Naive thymus-derived CD4-positive, alpha-beta T cell (primary cell): ENCODE measurements at regions of chr7 and their contacts with region 1.

Region 1: GRCh38 chr7:43658718-43659548 is 70.4 kb downstream of the COA1 start:
- DNase-seq: no peak
- ATAC-seq: peak; percentile 16
- H3K4me3 ChIP-seq: no peak overlapping the region
- H3K4me3 Mint-ChIP-seq: peak overlapping the region; percentile 3 to 71 (median 62)
- H3K27ac ChIP-seq: peak overlapping the region; percentile 48
- H3K27ac Mint-ChIP-seq: peak overlapping the region; percentile 70 to 92 (median 84)
- H3K4me1 ChIP-seq: peaks cover 31 to 34% of the 10 kb centered on the region in 2 donors
- H3K4me1 Mint-ChIP-seq: peaks cover 46 to 82% (median 70%) of the 10 kb centered on the region in 7 donors
- H3K27me3 ChIP-seq: no peaks in the 10 kb centered on the region
- H3K27me3 Mint-ChIP-seq: no peaks in the 10 kb centered on the region

Region 2: DNA sequence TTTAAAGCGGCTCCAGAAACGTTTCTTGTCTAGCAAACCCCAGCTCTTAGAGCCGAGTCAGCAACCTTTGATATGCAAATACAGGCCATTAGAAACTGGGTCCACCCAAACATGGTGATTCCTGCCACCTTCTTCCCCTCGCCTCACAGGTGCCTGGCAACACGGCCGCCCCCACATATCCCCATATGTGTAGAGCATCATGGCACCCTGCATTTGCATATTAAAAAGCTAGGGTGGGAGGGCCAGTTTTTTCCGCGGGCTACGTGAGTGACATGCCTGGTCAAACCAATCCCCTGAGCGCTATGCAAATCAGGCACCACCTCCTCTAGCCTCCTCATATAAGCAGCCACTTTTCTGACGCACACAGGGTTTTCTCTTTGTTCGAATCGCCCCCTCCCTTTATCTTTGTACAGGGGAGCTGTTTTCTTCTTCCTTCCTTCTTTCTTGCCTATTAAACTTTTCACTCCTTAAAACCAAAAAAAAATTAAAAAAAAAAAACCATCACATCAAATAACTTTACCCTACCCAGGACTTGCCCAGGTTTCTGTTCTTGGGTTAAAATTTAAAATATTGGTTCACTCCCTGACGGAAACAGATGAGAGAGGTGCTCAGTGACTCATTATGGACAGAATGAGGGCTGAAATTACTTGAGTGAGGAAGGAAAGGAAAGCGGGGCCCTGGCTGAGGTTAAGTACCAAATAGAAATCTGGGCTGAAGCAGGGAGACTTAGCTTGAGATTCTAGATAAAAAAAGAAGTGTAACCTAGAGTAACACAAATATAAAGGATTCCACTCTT is 10.6 kb after region 1 on chr7:
- CTCF ChIA-PET with region 1: interaction called, 5 read pairs
- POLR2A ChIA-PET with region 1: interaction called, 9 read pairs
- intact Hi-C with region 1: loop called in 1 of 2 experiments (anchors 1 kb)
- DNase-seq: peak in 7 of 9 donors; percentile 30 to 56 (median 47)
- ATAC-seq: peak; percentile 86
- H3K4me3 ChIP-seq: no peak overlapping the region
- H3K4me3 Mint-ChIP-seq: peak overlapping the region; percentile 39 to 81 (median 66)
- H3K27ac ChIP-seq: peak overlapping the region; percentile 53
- H3K27ac Mint-ChIP-seq: peak overlapping the region; percentile 67 to 93 (median 88)
- H3K4me1 ChIP-seq: peaks cover 10 to 29% of the 10 kb centered on the region in 2 donors
- H3K4me1 Mint-ChIP-seq: peaks cover 39 to 95% (median 91%) of the 10 kb centered on the region in 7 donors
- H3K27me3 ChIP-seq: no peaks in the 10 kb centered on the region
- H3K27me3 Mint-ChIP-seq: no peaks in the 10 kb centered on the region

Region 3: DNA sequence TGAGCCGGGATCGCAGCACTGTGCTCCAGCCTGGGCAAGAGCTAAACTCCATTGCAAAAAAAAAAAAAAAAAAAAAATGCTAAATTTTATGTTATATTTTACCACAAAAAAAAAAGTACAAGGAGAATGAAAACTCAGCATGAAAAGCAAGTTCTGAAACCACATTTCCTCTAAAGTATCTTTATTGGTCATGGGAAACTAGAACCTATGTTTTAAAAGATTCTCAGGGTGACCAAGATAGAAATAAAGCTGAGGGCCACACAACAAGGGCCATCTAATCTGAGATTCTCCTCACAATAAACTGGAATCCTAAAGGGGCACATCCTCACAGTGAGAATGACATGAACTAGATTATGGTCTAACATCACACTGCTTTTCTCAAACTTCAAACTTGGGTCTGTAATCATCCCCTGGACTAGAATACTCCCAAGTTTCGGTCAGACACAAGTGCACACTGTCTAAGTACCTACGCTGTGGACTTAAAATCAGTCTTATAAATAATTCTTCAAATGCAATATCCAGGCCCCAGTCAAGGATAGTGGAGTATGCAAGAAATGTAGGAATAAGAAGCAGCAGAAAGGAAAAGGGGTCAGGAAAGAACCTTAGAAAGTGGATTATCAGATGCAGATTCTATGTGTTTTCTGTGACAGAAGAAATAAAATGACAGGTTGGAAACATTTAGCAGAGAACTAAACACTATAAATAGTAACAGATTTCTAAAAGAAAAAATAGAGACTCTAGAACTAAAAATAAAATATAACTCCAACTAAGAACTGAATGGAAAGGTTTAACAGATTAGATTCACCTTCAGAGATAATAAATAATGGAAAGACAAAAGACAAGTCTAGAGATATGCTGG is 20.5 kb after region 1 on chr7:
- CTCF ChIA-PET with region 1: no interaction called
- POLR2A ChIA-PET with region 1: interaction called, 5 read pairs
- intact Hi-C with region 1: loop called (anchors 1 kb)
- DNase-seq: peak in 3 of 9 donors; percentile 16 to 34 (median 22)
- ATAC-seq: no peak
- H3K4me3 ChIP-seq: no peak overlapping the region
- H3K4me3 Mint-ChIP-seq: peak overlapping the region in 9 of 10 donors; percentile 21 to 72 (median 51)
- H3K27ac ChIP-seq: peak overlapping the region; percentile 21
- H3K27ac Mint-ChIP-seq: peak overlapping the region; percentile 30 to 95 (median 87)
- H3K4me1 ChIP-seq: peaks cover 22 to 24% of the 10 kb centered on the region in 2 donors
- H3K4me1 Mint-ChIP-seq: peaks cover 38 to 92% (median 86%) of the 10 kb centered on the region in 7 donors
- H3K27me3 ChIP-seq: no peaks in the 10 kb centered on the region
- H3K27me3 Mint-ChIP-seq: no peaks in the 10 kb centered on the region